Ascending aorta (tissue), 2 donors: ENCODE measurements at regions of chr12 and their contacts with region 1.

Region 1: DNA sequence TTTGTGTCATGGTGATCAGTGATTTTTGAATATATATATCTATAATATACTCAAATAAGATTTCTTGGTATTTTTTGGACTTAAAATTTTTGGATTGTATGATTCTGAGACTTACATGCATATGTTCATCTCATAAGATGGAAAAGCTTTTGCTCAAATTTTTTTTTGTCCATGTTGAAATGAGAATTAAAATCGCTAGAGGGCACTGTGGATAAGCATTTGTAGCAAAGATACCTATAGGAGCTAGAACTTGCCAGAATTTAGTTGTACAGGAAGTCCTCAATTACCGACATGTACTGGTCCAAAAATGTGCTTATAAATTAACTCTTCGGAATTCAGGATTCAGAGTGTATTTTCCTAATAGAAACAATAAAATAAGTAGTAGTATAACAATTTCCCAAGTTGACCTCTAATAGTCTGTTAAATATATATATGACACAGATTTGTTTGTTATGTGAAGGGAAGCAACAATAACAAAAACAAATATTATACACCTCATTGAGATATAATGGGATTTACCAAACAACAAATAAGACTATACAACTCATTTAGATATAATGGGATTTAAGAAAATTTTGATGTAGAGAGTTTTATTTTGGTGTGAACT is 179.6 kb downstream of the TMEM117 start:
- DNase-seq: no peak
- H3K4me3 ChIP-seq: no peak overlapping the region
- H3K27ac ChIP-seq: no peak overlapping the region
- H3K4me1 ChIP-seq: no peaks in the 10 kb centered on the region
- H3K27me3 ChIP-seq: no peaks in the 10 kb centered on the region
- CTCF ChIP-seq: peak; percentile 27 to 68 (median 46)

Region 2: DNA sequence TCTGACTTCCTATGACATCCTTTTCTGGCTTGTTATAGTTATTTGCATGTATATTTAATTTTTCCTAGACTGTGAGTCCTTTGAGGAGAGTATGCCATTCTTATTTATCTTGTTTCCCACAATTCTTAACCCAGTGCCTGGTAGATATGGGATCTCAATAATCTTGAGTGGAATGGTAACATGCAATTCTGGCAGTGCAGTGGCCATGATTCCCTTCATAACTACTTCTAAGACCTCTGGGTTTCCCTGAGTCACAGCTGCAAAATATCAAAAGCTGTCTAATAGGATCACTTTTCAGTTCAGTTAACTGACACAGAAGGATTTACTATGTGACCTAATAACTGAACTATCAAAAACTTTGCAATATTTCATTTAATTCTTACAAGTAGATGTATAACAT is 598.5 kb before region 1 on chr12:
- intact Hi-C with region 1: no loop called
- DNase-seq: no peak
- H3K4me3 ChIP-seq: no peak overlapping the region
- H3K27ac ChIP-seq: no peak overlapping the region
- H3K4me1 ChIP-seq: no peaks in the 10 kb centered on the region
- H3K27me3 ChIP-seq: no peaks in the 10 kb centered on the region
- CTCF ChIP-seq: no peak

Region 3: DNA sequence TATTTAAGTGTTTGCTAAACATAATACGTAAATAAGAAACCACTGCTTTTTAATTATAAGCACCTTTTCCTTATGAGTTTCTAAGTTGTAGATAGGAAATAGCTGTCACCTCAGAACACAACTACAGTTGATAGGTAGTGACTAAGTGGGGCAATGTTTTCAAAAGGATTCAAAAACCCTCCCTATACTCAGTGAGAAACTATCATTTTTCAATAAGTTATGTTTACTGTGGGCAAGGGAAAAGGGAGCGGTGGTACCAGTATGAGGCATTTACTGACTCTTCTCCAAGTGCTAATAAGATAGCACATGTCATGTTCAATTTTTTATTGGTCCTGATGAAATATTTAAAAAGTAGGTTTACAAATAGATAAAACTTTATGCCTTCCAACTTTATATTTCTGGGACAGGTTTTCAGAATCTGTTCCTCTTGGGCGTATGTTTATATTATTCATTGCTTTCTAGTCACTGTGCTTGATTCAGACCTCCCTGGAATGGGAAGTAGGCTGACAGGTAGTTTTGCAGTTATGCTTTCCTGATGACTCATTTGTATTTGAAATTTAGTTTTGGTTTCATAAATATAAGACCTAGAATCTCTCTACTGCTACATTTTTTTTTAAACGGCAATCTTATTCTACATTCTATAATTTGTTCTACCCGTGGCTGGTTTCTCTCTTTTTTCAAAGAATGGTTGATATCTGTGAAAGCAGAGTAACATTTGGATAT is 26.4 kb before region 1 on chr12:
- intact Hi-C with region 1: no loop called
- DNase-seq: no peak
- H3K4me3 ChIP-seq: no peak overlapping the region
- H3K27ac ChIP-seq: no peak overlapping the region
- H3K4me1 ChIP-seq: no peaks in the 10 kb centered on the region
- H3K27me3 ChIP-seq: no peaks in the 10 kb centered on the region
- CTCF ChIP-seq: no peak

Region 4: GRCh38 chr12:44929236-44929885 is 913.9 kb after region 1 on chr12:
- intact Hi-C with region 1: loop called (anchors 5 kb)
- DNase-seq: no peak
- H3K4me3 ChIP-seq: no peak overlapping the region
- H3K27ac ChIP-seq: no peak overlapping the region
- H3K4me1 ChIP-seq: no peaks in the 10 kb centered on the region
- H3K27me3 ChIP-seq: no peaks in the 10 kb centered on the region
- CTCF ChIP-seq: no peak